Right ventricle myocardium inferior (tissue), 1 donor: ENCODE measurements at regions of chr2 and their contacts with region 1.

Region 1: DNA sequence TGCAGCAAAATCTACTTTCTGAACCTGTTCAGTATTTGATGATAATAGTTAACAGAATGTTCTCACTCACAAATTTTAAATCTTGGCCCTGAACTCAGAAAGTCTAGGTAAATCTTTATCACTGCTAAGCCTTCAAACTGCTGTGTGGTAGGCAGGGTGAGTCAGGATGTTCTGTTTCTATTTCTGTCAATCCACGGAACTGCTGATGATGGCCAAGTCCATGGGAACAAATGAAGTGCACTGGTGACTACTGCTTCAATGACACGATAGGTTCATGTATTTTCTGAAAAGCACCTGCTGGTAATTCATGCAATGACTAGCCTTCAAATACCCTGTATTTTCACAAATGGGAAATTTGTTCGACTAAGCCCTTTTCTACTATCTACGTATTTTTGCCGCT is 14.2 kb downstream of the NIFK start:
- DNase-seq: no peak
- ATAC-seq: peak; percentile 47

Region 2: GRCh38 chr2:121095257-121096080 is 627.0 kb before region 1 on chr2:
- intact Hi-C with region 1: loop called (anchors 10 kb)
- DNase-seq: no peak
- ATAC-seq: peak; percentile 14

Region 3: GRCh38 chr2:121400201-121400600 is 322.3 kb before region 1 on chr2:
- intact Hi-C with region 1: loop called (anchors 2 kb)
- DNase-seq: no peak
- ATAC-seq: no peak

Region 4: GRCh38 chr2:121596221-121597080 is 126.0 kb before region 1 on chr2:
- intact Hi-C with region 1: loop called (anchors 5 kb)
- DNase-seq: peak; percentile 64
- ATAC-seq: peak; percentile 78

Region 5: DNA sequence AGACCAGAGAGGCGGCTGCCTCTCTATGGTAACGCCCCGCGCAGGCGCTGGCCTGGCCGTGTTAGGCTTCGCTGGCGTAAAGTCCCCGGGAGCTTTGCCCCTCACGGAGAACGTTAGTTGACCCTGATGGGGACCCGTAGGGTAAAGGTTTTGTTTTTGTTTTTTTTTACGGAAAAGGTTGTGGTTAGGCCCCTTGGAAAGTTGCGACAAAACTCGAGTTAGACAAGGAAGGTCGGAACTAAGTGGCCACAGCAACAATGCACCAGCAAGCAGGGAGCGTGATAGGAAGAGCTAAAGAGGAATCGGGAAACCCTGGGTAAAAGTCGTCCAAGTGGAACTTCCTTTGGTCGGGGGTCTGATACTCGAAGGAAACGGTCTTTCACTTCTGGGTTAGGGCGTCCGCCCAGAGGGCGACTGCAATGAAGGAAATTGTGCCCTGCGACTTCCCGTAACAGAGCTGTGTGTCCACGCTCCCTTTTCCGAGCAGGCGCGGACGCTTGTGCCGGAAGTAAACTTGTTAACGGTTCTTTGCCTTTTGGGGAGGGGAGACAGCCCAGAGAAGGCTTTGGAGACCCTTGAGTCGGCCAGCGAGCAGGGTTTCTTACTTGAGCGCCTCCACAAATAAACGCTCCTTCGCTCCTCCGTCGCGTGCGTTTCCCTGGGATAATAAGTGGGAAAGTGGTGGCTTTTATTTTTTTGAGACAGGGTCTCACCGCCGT is 72.7 kb before region 1 on chr2:
- intact Hi-C with region 1: loop called (anchors 5 kb)
- DNase-seq: peak; percentile 98
- ATAC-seq: peak; percentile 99